CD8-positive, alpha-beta T cell (primary cell): ENCODE measurements at regions of chr14 and their contacts with region 1.

Region 1: DNA sequence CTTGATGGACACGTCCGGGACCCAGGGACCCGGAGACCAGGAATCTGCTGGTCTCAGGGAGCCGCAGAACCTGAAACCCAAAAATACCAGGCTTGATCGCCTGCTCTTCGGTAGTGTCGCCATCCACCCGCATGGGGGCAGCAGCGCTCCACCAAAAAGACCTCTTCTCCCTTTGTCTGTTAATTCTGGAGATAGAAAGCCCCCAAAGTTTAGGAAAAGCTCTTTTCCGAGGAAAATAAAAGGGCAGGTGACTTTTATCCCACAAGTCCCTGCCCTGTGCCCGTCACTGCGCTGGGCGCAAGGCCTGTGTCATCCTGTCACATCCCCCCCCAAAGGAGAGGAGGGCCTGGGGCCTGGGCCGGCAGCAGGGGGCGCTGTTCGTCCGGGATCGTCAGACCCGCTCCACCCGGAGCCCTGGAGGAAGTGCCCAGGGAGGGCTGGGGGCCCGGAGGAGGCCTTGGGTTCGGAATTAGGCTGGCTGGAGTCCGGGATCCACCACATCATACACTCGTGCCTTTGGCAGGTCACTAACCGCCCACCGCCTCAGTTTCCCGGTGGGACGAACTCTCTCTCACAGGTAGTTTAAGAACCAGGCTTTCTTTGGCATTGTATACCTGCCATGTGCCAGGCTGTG is 31.9 kb downstream of the DAD1 start:
- DNase-seq: peak; percentile 79 to 98 (median 93)
- ATAC-seq: peak; percentile 17
- H3K4me3 ChIP-seq: peak overlapping the region; percentile 46 to 60
- H3K4me3 Mint-ChIP-seq: peak overlapping the region; percentile 81
- H3K27ac ChIP-seq: peak overlapping the region; percentile 86 to 97
- H3K27ac Mint-ChIP-seq: peak overlapping the region; percentile 98
- H3K4me1 ChIP-seq: peaks cover 86% of the 10 kb centered on the region
- H3K4me1 Mint-ChIP-seq: peaks cover 91% of the 10 kb centered on the region
- H3K27me3 ChIP-seq: no peaks in the 10 kb centered on the region
- H3K27me3 Mint-ChIP-seq: no peaks in the 10 kb centered on the region
- CTCF ChIP-seq: peak; percentile 100

Region 2: DNA sequence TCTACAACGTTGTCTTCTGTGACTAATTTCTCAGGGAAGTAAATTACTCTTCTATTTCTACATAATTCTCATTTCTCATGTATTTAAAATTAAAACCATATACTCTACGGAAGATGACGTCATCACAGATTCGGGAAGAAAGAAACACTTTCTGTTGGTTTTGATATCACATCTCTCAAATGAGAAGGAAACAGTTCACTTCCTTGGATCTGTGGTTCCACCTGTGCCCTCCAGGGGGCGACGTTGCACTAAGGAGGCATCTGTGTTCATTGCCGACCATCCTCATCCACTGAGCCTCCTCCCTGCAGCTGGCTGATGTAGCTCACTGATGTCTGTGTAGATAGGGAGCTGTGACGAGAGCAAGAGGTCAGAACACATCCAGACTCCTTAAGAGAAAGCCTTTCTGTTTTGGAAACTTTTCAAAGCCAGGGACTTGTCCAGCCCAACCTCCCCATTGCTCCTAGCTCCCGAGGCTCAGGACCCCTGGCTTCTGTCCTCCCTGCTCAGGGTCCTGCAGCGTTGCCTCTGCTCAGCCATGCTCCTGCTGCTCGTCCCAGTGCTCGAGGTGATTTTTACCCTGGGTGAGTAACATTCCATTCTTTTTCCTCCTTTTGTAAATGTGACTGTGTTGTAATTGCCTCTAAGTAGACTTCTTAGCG is 710.8 kb before region 1 on chr14:
- CTCF ChIA-PET with region 1: interaction called, 5 read pairs
- POLR2A ChIA-PET with region 1: interaction called, 6 read pairs
- intact Hi-C with region 1: loop called (anchors 1 to 2 kb)
- DNase-seq: peak; percentile 32 to 78 (median 65)
- ATAC-seq: peak; percentile 83
- H3K4me3 ChIP-seq: peak overlapping the region; percentile 4 to 44
- H3K4me3 Mint-ChIP-seq: peak overlapping the region; percentile 86
- H3K27ac ChIP-seq: peak overlapping the region in 1 of 2 experiments; percentile 25
- H3K27ac Mint-ChIP-seq: peak overlapping the region; percentile 87
- H3K4me1 ChIP-seq: no peaks in the 10 kb centered on the region
- H3K4me1 Mint-ChIP-seq: peaks cover 7% of the 10 kb centered on the region
- H3K27me3 ChIP-seq: no peaks in the 10 kb centered on the region
- H3K27me3 Mint-ChIP-seq: peaks cover 18% of the 10 kb centered on the region
- CTCF ChIP-seq: peak; percentile 75

Region 3: GRCh38 chr14:21987937-21988336 is 569.2 kb before region 1 on chr14:
- CTCF ChIA-PET with region 1: interaction called, 24 read pairs
- POLR2A ChIA-PET with region 1: interaction called, 7 read pairs
- intact Hi-C with region 1: loop called in 1 of 2 experiments (anchors 5 kb)
- DNase-seq: peak in 2 of 9 experiments; percentile 43 to 61
- ATAC-seq: no peak
- H3K4me3 ChIP-seq: no peak overlapping the region
- H3K4me3 Mint-ChIP-seq: no peak overlapping the region
- H3K27ac ChIP-seq: no peak overlapping the region
- H3K27ac Mint-ChIP-seq: peak overlapping the region; percentile 37
- H3K4me1 ChIP-seq: peaks cover 6% of the 10 kb centered on the region
- H3K4me1 Mint-ChIP-seq: peaks cover 14% of the 10 kb centered on the region
- H3K27me3 ChIP-seq: no peaks in the 10 kb centered on the region
- H3K27me3 Mint-ChIP-seq: no peaks in the 10 kb centered on the region
- CTCF ChIP-seq: peak; percentile 41

Region 4: GRCh38 chr14:22163051-22163450 is 394.1 kb before region 1 on chr14:
- CTCF ChIA-PET with region 1: interaction called, 7 read pairs
- POLR2A ChIA-PET with region 1: interaction called, 9 read pairs
- intact Hi-C with region 1: loop called (anchors 1 to 5 kb)
- DNase-seq: peak in 2 of 9 experiments; percentile 26 to 49
- ATAC-seq: peak; percentile 56
- H3K4me3 ChIP-seq: no peak overlapping the region
- H3K4me3 Mint-ChIP-seq: peak overlapping the region; percentile 84
- H3K27ac ChIP-seq: no peak overlapping the region
- H3K27ac Mint-ChIP-seq: peak overlapping the region; percentile 92
- H3K4me1 ChIP-seq: no peaks in the 10 kb centered on the region
- H3K4me1 Mint-ChIP-seq: peaks cover 16% of the 10 kb centered on the region
- H3K27me3 ChIP-seq: no peaks in the 10 kb centered on the region
- H3K27me3 Mint-ChIP-seq: no peaks in the 10 kb centered on the region
- CTCF ChIP-seq: no peak

Region 5: GRCh38 chr14:22505697-22506377 is 51.3 kb before region 1 on chr14:
- CTCF ChIA-PET with region 1: interaction called, 20 read pairs
- POLR2A ChIA-PET with region 1: interaction called, 472 read pairs
- intact Hi-C with region 1: loop called in 1 of 2 experiments (anchors 1 kb)
- DNase-seq: peak in 3 of 9 experiments; percentile 48 to 65 (median 48)
- ATAC-seq: peak; percentile 38
- H3K4me3 ChIP-seq: peak overlapping the region; percentile 49 to 53
- H3K4me3 Mint-ChIP-seq: peak overlapping the region; percentile 81
- H3K27ac ChIP-seq: peak overlapping the region; percentile 72 to 82
- H3K27ac Mint-ChIP-seq: peak overlapping the region; percentile 99
- H3K4me1 ChIP-seq: peaks cover 51% of the 10 kb centered on the region
- H3K4me1 Mint-ChIP-seq: peaks cover 78% of the 10 kb centered on the region
- H3K27me3 ChIP-seq: no peaks in the 10 kb centered on the region
- H3K27me3 Mint-ChIP-seq: no peaks in the 10 kb centered on the region
- CTCF ChIP-seq: no peak

Region 6: GRCh38 chr14:22579236-22579635 is 22.1 kb after region 1 on chr14:
- CTCF ChIA-PET with region 1: interaction called, 273 read pairs
- POLR2A ChIA-PET with region 1: no interaction called
- intact Hi-C with region 1: no loop called
- DNase-seq: peak in 1 of 9 experiments; percentile 28
- ATAC-seq: no peak
- H3K4me3 ChIP-seq: no peak overlapping the region
- H3K4me3 Mint-ChIP-seq: no peak overlapping the region
- H3K27ac ChIP-seq: no peak overlapping the region
- H3K27ac Mint-ChIP-seq: no peak overlapping the region
- H3K4me1 ChIP-seq: peaks cover 21% of the 10 kb centered on the region
- H3K4me1 Mint-ChIP-seq: peaks cover 60% of the 10 kb centered on the region
- H3K27me3 ChIP-seq: no peaks in the 10 kb centered on the region
- H3K27me3 Mint-ChIP-seq: no peaks in the 10 kb centered on the region
- CTCF ChIP-seq: no peak

Region 7: GRCh38 chr14:22737052-22737451 is 179.9 kb after region 1 on chr14:
- CTCF ChIA-PET with region 1: no interaction called
- POLR2A ChIA-PET with region 1: no interaction called
- intact Hi-C with region 1: no loop called
- DNase-seq: no peak
- ATAC-seq: no peak
- H3K4me3 ChIP-seq: no peak overlapping the region
- H3K4me3 Mint-ChIP-seq: no peak overlapping the region
- H3K27ac ChIP-seq: no peak overlapping the region
- H3K27ac Mint-ChIP-seq: no peak overlapping the region
- H3K4me1 ChIP-seq: no peaks in the 10 kb centered on the region
- H3K4me1 Mint-ChIP-seq: peaks cover 2% of the 10 kb centered on the region
- H3K27me3 ChIP-seq: no peaks in the 10 kb centered on the region
- H3K27me3 Mint-ChIP-seq: peaks cover 5% of the 10 kb centered on the region
- CTCF ChIP-seq: no peak

Region 8: GRCh38 chr14:22900081-22900799 is 343.1 kb after region 1 on chr14:
- CTCF ChIA-PET with region 1: interaction called, 5 read pairs
- POLR2A ChIA-PET with region 1: no interaction called
- intact Hi-C with region 1: loop called in 1 of 2 experiments (anchors 1 kb)
- DNase-seq: peak in 5 of 9 experiments; percentile 33 to 82 (median 48)
- ATAC-seq: peak; percentile 86
- H3K4me3 ChIP-seq: no peak overlapping the region
- H3K4me3 Mint-ChIP-seq: no peak overlapping the region
- H3K27ac ChIP-seq: no peak overlapping the region
- H3K27ac Mint-ChIP-seq: no peak overlapping the region
- H3K4me1 ChIP-seq: peaks cover 3% of the 10 kb centered on the region
- H3K4me1 Mint-ChIP-seq: peaks cover 6% of the 10 kb centered on the region
- H3K27me3 ChIP-seq: no peaks in the 10 kb centered on the region
- H3K27me3 Mint-ChIP-seq: no peaks in the 10 kb centered on the region
- CTCF ChIP-seq: peak; percentile 60